Left cardiac atrium (tissue), 4 donors: ENCODE measurements at regions of chr15 and their contacts with region 1.

Region 1: GRCh38 chr15:48627260-48627960 is 18.1 kb downstream of the FBN1 start:
- DNase-seq: peak; percentile 34
- ATAC-seq: peak; percentile 39 to 72

Region 2: DNA sequence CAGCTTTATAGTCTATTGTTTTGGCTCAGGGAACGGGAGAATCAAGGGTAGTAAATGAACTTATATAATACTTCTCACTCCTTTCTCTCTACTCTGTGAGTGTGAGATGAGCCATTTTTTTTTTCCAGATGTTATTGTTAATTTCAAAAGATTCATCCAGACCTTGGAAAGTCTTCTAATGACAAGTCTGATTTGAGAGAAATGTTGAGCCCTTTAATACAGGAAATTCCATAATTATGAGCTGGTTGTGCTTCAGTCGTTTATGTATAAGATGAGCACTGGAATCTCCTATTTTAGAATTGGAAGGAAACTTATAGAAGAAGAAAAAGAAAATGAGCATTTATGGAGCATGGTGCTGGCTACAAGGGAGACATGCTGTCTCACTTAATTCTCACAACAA is 73.9 kb before region 1 on chr15:
- intact Hi-C with region 1: loop called in 1 of 2 experiments (anchors 5 kb)
- DNase-seq: no peak
- ATAC-seq: no peak

Region 3: DNA sequence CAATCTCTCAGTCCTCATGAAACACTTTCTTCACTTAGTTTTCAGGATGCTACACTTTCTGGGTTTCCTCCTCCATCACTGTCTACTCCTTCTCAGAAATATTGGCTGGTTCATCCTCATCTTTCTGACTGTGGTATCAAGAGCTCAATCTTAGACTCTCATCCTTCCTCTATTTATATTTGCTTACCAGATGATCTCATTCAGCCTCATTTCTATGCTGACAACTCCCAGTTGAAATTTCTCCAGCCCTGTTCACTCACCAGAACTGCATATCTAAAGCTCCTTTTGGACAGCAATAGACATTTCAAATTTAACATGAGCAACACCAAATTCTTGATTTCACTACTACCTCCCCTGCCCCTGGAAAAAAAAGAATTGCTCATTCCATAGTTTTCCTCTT is 66.1 kb after region 1 on chr15:
- intact Hi-C with region 1: no loop called
- DNase-seq: no peak
- ATAC-seq: peak in 1 of 2 donors; percentile 80

Region 4: GRCh38 chr15:49832511-49832910 is 1205.1 kb after region 1 on chr15:
- intact Hi-C with region 1: no loop called
- DNase-seq: no peak
- ATAC-seq: peak; percentile 44 to 70